ENCODE measurements at regions of chr4 and their contacts with region 1.

Region 1: GRCh38 chr4:19803406-19803937 is 448.2 kb upstream of the SLIT2 start:
- DNase-seq: no peak
- H3K4me3 ChIP-seq: no peak overlapping the region
- H3K4me3 Mint-ChIP-seq: no peak overlapping the region
- H3K27ac ChIP-seq: no peak overlapping the region
- H3K27ac Mint-ChIP-seq: no peak overlapping the region
- H3K4me1 ChIP-seq: no peaks in the 10 kb centered on the region
- H3K4me1 Mint-ChIP-seq: no peaks in the 10 kb centered on the region
- H3K27me3 ChIP-seq: no peaks in the 10 kb centered on the region
- H3K27me3 Mint-ChIP-seq: no peaks in the 10 kb centered on the region

Region 2: GRCh38 chr4:19319607-19320006 is 483.9 kb before region 1 on chr4:
- CTCF ChIA-PET with region 1: no interaction called
- POLR2A ChIA-PET with region 1: no interaction called
- intact Hi-C with region 1: no loop called
- DNase-seq: no peak
- H3K4me3 ChIP-seq: no peak overlapping the region
- H3K4me3 Mint-ChIP-seq: no peak overlapping the region
- H3K27ac ChIP-seq: no peak overlapping the region
- H3K27ac Mint-ChIP-seq: no peak overlapping the region
- H3K4me1 ChIP-seq: no peaks in the 10 kb centered on the region
- H3K4me1 Mint-ChIP-seq: no peaks in the 10 kb centered on the region
- H3K27me3 ChIP-seq: no peaks in the 10 kb centered on the region
- H3K27me3 Mint-ChIP-seq: no peaks in the 10 kb centered on the region

Region 3: DNA sequence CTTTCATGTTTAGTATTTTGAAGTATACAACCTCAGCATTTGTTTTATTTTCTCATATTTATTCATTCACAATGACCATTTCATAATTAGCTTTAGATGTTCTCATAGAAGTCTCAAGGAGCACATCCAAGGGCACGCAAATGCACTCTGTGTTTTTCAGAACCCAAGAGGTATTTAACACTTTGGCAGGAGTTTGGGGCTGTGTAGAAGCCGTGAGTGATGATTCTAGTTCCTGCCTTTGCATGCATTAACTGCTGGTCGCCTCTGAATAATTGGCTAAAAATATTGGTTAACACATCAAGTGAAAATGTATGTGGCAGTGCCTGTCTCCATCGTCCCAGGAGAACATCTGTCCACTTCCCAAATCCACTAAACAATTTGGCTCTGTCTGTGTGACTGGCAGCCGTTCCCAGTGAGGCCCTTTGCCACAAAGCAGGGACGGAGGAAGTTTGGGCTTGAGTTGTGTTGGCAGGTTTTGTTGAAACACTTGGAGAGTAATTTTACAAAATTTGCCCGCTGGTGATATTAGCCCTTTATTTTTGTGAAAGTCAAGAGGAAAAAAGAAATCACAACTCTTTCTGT is 282.4 kb before region 1 on chr4:
- CTCF ChIA-PET with region 1: no interaction called
- POLR2A ChIA-PET with region 1: no interaction called
- intact Hi-C with region 1: no loop called
- DNase-seq: no peak
- H3K4me3 ChIP-seq: no peak overlapping the region
- H3K4me3 Mint-ChIP-seq: no peak overlapping the region
- H3K27ac ChIP-seq: no peak overlapping the region
- H3K27ac Mint-ChIP-seq: no peak overlapping the region
- H3K4me1 ChIP-seq: no peaks in the 10 kb centered on the region
- H3K4me1 Mint-ChIP-seq: no peaks in the 10 kb centered on the region
- H3K27me3 ChIP-seq: no peaks in the 10 kb centered on the region
- H3K27me3 Mint-ChIP-seq: no peaks in the 10 kb centered on the region

Region 4: DNA sequence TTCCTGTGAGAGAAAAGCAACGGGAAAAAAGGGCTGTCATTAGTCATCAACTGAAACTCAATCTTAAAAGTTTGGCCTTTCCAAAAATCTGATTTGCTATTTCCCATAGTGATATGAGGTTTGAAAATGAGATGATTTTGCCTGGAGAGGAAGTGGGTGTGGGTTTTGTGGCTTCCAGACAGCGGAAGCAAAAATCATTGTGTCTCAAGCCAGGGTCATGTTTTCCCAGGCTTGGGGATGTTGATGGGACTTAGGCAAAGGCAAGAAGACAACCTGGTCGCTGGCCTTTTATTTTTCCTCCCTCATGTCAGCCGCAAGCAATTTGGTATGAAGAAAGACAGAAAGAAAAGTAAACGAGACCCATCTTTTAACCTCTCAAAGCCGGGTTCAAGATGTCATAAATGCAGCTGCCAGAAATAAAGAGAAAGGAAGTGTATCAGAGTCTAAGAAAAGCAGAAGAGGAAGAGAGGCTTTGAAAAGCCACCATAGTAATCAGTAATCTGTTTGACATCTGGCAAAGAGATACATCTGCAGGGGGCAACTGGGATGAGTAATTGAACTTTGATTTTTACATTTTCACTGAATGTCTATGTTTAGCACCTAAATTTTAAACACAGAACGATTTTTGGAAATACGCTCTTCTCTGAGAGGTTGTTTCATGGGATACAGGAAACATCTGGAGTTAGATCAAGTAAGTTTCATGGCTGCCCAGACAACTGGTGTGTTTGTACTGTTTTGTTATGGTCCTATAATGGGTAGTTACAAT is 73.4 kb before region 1 on chr4:
- CTCF ChIA-PET with region 1: no interaction called
- POLR2A ChIA-PET with region 1: no interaction called
- intact Hi-C with region 1: no loop called
- DNase-seq: no peak
- H3K4me3 ChIP-seq: no peak overlapping the region
- H3K4me3 Mint-ChIP-seq: no peak overlapping the region
- H3K27ac ChIP-seq: no peak overlapping the region
- H3K27ac Mint-ChIP-seq: no peak overlapping the region
- H3K4me1 ChIP-seq: no peaks in the 10 kb centered on the region
- H3K4me1 Mint-ChIP-seq: peaks cover 0 to 3% (median 0%) of the 10 kb centered on the region in 4 donors
- H3K27me3 ChIP-seq: no peaks in the 10 kb centered on the region
- H3K27me3 Mint-ChIP-seq: no peaks in the 10 kb centered on the region

Region 5: DNA sequence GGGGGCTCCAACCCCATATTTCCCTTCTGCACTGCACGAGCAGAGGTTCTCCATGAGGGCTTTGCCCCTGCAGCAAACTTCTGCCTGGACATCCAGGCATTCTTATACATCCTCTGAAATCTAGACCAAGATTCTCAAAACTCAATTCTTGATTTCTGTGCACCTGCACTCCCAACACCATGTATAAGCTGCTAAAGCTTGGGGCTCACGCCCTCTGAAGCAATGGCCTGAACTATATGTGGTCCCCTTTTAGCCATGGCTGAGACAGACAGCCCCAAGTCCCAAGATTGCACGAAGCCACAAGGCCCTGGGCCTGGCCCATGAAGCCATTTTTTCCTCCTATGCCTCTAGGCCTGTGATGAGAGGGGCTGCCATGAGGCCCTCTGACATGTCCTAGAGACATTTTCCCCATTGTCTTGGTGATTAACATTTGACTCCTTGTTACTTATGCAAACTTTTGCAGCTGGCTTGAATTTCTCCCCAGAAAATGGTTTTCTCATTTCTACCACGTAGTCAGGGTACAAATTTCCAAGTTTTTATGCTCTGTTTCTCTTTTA is 19.7 kb before region 1 on chr4:
- CTCF ChIA-PET with region 1: no interaction called
- POLR2A ChIA-PET with region 1: no interaction called
- intact Hi-C with region 1: loop called (anchors 1 kb)
- DNase-seq: no peak
- H3K4me3 ChIP-seq: no peak overlapping the region
- H3K4me3 Mint-ChIP-seq: no peak overlapping the region
- H3K27ac ChIP-seq: no peak overlapping the region
- H3K27ac Mint-ChIP-seq: no peak overlapping the region
- H3K4me1 ChIP-seq: no peaks in the 10 kb centered on the region
- H3K4me1 Mint-ChIP-seq: no peaks in the 10 kb centered on the region
- H3K27me3 ChIP-seq: no peaks in the 10 kb centered on the region
- H3K27me3 Mint-ChIP-seq: no peaks in the 10 kb centered on the region

Measured in CD4-positive, alpha-beta memory T cell (primary cell).